ENCODE measurements at regions of chr3 and their contacts with region 1.

Region 1: DNA sequence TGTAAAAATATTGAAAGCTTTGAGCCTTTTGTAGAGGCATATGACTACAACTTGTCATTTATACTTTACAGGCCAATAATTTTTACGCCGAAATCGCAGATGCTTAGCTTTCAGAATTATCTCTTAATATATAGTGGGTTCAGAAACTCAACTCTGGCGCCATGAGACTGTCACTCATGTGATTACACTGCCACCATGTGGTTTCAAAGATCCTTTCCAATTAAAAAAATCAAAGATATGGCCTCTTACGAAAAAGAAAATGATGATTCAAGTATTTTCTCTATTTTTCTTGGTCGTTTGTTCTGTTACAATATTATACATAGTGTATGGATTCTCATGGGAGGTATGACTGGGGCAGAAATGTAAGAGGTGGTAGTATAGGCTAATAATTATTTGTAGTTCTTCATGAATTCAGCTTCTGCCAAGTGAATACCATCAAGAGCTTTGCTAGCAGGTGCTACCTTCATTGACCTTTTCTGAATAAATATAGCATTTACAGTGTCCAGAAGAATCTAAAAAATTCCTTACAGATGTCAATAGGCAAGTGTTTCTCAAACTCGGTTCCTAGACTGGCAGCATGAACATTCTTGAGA is 751.7 kb upstream of the GOLIM4 start:
- DNase-seq: no peak
- ATAC-seq: no peak
- H3K4me3 Mint-ChIP-seq: no peak overlapping the region
- H3K27ac Mint-ChIP-seq: no peak overlapping the region
- H3K4me1 Mint-ChIP-seq: no peaks in the 10 kb centered on the region
- H3K27me3 Mint-ChIP-seq: peaks cover 7% of the 10 kb centered on the region

Region 2: DNA sequence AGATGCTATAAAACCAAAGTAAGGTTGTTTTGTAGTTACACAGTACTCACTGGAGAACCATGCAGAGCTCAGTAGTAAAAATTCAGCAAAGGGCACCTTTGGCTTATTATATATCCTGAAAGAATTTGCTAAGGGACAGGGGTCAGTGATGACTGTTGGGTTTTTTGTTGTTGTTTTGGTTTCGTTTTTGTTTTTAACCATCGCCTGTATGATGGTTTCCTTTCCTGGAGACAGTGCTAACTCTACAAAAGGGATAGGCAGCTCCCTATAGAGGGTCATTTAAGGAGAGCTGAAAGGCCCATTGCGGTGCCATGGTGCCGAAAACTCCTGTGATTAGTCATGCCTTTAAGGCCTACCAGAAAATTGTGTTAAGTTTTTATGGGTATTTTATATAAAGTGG is 633.5 kb before region 1 on chr3:
- CTCF ChIA-PET with region 1: interaction called, 21 read pairs
- POLR2A ChIA-PET with region 1: no interaction called
- DNase-seq: no peak
- ATAC-seq: peak; percentile 72
- H3K4me3 Mint-ChIP-seq: peak overlapping the region; percentile 43
- H3K27ac Mint-ChIP-seq: peak overlapping the region; percentile 50
- H3K4me1 Mint-ChIP-seq: peaks cover 11% of the 10 kb centered on the region
- H3K27me3 Mint-ChIP-seq: peaks cover 3% of the 10 kb centered on the region

Region 3: GRCh38 chr3:168794427-168794826 is 53.0 kb before region 1 on chr3:
- CTCF ChIA-PET with region 1: no interaction called
- POLR2A ChIA-PET with region 1: no interaction called
- DNase-seq: no peak
- ATAC-seq: no peak
- H3K4me3 Mint-ChIP-seq: no peak overlapping the region
- H3K27ac Mint-ChIP-seq: no peak overlapping the region
- H3K4me1 Mint-ChIP-seq: no peaks in the 10 kb centered on the region
- H3K27me3 Mint-ChIP-seq: no peaks in the 10 kb centered on the region

Measured in activated CD8-positive, alpha-beta T cell treated with anti-CD3 and anti-CD28 coated beads, Interleukin-2, amount 10 ng/mL, durations not matched to agents 7 days and 5 days (primary cell).